K562 (cell line): ENCODE measurements at regions of chr13 and their contacts with region 1.

Region 1: GRCh38 chr13:80363890-80364503 is 23.1 kb upstream of the SPRY2 start:
- DNase-seq: peak in 2 of 4 experiments; percentile 21 to 28
- ATAC-seq: no peak
- H3K4me3 ChIP-seq: no peak overlapping the region
- H3K27ac ChIP-seq: no peak overlapping the region
- H3K4me1 ChIP-seq: peaks cover 0 to 34% of the 10 kb centered on the region in 2 experiments; a peak in 3 of 5 replicates
- H3K27me3 ChIP-seq: no peaks in the 10 kb centered on the region
- CTCF ChIP-seq: peak; percentile 36 to 67 (median 56); a peak in 5 of 6 replicates
- EP300 ChIP-seq: no peak
- POLR2A ChIP-seq: no peak
- RAD21 ChIP-seq: peak; percentile 48 to 66

Region 2: GRCh38 chr13:79267560-79267959 is 1096.4 kb before region 1 on chr13:
- CTCF ChIA-PET with region 1: no interaction called
- POLR2A ChIA-PET with region 1: no interaction called
- in situ Hi-C with region 1: no loop called
- intact Hi-C with region 1: no loop called
- DNase-seq: no peak
- ATAC-seq: no peak
- H3K4me3 ChIP-seq: no peak overlapping the region
- H3K27ac ChIP-seq: no peak overlapping the region
- H3K4me1 ChIP-seq: no peaks in the 10 kb centered on the region
- H3K27me3 ChIP-seq: no peaks in the 10 kb centered on the region
- CTCF ChIP-seq: no peak
- EP300 ChIP-seq: no peak
- POLR2A ChIP-seq: no peak
- RAD21 ChIP-seq: no peak

Region 3: DNA sequence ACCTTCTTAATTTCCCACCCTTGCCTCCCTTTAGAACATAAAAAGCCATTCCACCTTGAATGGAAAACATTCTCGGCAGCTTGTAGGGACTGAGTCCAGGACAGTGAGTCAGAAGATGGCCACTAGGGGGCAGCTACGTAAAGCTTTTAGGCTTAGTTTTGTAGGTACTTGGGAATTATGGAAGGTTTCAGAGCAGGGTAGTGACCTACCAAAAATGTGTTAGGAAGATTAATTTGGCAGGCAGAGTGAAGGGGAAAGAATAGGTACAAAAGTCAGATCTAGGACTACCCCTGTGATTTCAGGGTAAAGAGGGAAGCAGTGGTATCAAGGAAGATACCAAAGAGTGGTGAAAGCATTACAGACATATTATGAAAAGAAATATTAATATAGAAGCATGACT is 684.7 kb before region 1 on chr13:
- CTCF ChIA-PET with region 1: interaction called, 3 read pairs
- POLR2A ChIA-PET with region 1: no interaction called
- in situ Hi-C with region 1: no loop called
- intact Hi-C with region 1: loop called (anchors 1 kb)
- DNase-seq: peak; percentile 9 to 61 (median 30)
- ATAC-seq: peak; percentile 83
- H3K4me3 ChIP-seq: no peak overlapping the region
- H3K27ac ChIP-seq: no peak overlapping the region
- H3K4me1 ChIP-seq: no peaks in the 10 kb centered on the region
- H3K27me3 ChIP-seq: no peaks in the 10 kb centered on the region
- CTCF ChIP-seq: peak; percentile 50 to 68 (median 59)
- EP300 ChIP-seq: no peak
- POLR2A ChIP-seq: no peak
- RAD21 ChIP-seq: peak; percentile 52 to 69

Region 4: DNA sequence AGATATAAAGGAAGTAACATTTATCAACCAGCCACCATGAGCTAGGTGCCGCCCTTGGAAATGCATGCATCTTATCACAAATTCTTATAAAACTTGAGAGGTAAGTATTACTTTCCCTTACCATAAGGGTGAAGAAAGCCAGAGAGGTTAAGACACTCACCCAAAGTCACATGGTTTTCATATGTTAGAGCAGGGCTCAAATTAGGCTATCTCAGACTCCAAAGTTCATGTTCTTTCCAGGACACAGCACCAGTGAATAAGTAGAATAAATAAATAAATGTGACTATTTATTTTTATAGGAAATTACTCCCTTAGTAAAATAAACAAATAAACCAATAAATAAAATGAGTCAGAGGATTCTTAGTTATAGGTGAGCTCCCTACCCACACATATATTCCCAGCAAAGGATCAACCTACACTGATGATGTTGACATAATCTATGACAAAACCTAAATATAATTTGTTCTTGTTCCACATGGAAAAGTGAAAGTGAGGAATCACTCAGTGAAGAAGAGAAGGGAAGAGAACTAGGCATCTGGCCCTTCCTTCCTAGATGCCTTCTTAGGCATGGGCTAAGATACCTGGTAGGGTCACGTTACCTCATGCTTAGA is 50.2 kb before region 1 on chr13:
- CTCF ChIA-PET with region 1: no interaction called
- POLR2A ChIA-PET with region 1: no interaction called
- in situ Hi-C with region 1: no loop called
- intact Hi-C with region 1: no loop called
- DNase-seq: no peak
- ATAC-seq: no peak
- H3K4me3 ChIP-seq: no peak overlapping the region
- H3K27ac ChIP-seq: no peak overlapping the region
- H3K4me1 ChIP-seq: no peaks in the 10 kb centered on the region
- H3K27me3 ChIP-seq: no peaks in the 10 kb centered on the region
- CTCF ChIP-seq: no peak
- EP300 ChIP-seq: no peak
- POLR2A ChIP-seq: no peak
- RAD21 ChIP-seq: no peak